HAP-1 (cell line): ENCODE measurements at regions of chr1 and their contacts with region 1.

Region 1: DNA sequence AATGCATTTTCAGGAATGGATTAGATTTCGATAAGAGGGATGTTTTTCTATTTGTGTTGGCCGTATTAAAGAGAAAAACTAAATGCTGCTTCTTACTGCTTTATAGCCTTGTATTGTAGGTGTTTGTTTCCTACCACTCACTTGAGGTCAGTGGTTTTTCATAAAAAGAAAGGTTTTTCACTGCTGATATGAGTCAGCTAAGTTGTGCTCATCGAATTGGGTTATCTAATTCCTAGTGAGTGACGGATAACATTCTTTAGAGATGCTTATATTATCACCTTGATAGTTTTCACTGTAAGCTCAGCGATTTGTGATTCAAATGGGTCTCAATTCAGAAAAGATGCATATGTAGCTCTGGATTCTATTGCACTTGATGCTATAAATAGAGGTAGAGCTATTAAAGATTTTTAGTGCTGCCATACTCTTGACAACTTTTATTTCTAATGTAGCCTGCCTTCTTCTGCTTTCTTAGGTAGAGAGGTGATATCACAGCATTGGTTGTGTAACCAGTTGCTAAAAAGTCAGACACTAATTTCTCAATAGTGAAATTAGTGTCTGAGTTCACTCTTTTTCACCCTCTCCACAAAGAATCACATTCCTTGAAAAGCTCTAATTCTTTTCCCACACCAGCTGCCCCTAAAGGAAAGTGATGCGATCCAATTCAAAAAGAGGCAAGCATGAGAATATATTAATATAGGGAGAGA is 180.0 kb downstream of the RASAL2 start:
- DNase-seq: no peak
- H3K4me3 ChIP-seq: no peak overlapping the region
- H3K4me1 ChIP-seq: peaks cover 34% of the 10 kb centered on the region
- H3K27me3 ChIP-seq: no peaks in the 10 kb centered on the region

Region 2: DNA sequence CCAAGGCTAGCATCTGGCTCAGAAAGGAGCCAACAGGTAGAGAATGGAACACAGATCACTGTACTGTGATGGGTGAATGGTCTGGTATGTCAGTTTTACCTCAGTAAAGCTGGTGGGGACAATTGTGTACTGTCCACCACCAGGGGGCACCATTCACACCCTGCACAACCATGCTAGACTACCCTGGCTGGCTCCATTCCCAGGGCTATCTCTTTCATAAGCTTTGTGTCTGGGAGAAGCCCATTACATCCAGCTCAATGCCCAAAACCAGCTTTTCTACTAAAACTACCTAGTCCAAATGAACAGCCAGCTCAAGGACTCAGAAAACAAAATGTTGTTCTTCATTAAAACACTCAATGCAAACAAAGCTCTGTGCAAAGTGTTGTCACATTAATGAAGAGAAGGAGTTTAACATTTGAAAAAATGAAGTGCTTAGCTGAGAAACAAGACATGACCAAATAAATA is 242.0 kb before region 1 on chr1:
- in situ Hi-C with region 1: loop called (anchors 10 kb)
- DNase-seq: peak; percentile 76 to 94
- H3K4me3 ChIP-seq: no peak overlapping the region
- H3K4me1 ChIP-seq: 0 out of 2 replicates have a peak, but pooled peaks cover 5% of the 10 kb centered on the region
- H3K27me3 ChIP-seq: no peaks in the 10 kb centered on the region

Region 3: DNA sequence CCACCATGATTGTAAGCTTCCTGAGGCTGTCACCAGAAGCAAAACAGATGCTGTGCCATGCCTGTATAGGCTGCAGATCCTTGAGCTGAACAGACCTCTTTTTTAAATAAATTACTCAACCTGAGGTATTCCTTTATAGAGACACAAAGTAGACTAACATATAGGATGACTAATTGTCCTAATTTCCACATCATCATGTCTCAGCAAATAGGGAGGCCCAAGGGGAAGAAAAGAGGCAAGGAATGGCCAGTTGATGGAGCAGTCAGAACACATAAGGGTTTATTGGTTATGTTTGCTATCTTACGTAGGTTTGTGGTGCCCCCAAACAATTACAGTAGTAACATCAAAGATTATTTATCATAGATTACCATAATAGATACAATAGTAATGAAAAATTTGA is 53.8 kb before region 1 on chr1:
- in situ Hi-C with region 1: no loop called
- DNase-seq: no peak
- H3K4me3 ChIP-seq: no peak overlapping the region
- H3K4me1 ChIP-seq: no peaks in the 10 kb centered on the region
- H3K27me3 ChIP-seq: no peaks in the 10 kb centered on the region